HEK293 (cell line): ENCODE measurements at regions of chrX and their contacts with region 1.

Region 1: DNA sequence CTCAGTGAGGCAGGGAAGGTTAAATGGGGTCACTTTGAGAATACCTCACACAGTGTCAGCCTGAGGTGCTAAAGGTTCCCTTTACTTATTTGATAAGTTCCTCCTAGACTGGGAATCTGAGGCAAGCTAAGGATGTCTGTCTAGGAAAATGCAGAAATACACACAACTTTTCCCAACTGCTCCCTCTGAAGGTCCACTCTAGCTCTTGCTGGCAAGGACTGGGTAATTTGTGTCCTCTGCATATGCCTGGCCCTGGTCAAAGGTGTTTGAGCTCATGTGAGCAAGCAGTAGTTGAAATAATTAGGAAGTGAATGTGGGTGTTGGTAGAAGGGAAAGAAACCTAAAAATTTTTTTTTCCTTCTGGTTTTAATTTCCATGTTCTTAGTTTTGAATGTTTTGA is 21.3 kb downstream of the TXLNG start:
- H3K4me3 ChIP-seq: no peak overlapping the region
- H3K27ac ChIP-seq: no peak overlapping the region
- H3K4me1 ChIP-seq: peaks cover 9% of the 10 kb centered on the region
- CTCF ChIP-seq: no peak

Region 2: GRCh38 chrX:16797358-16797757 is 10.2 kb before region 1 on chrX:
- CTCF ChIA-PET with region 1: interaction called, 16 read pairs
- POLR2A ChIA-PET with region 1: no interaction called
- H3K4me3 ChIP-seq: no peak overlapping the region
- H3K27ac ChIP-seq: no peak overlapping the region
- H3K4me1 ChIP-seq: no peaks in the 10 kb centered on the region
- CTCF ChIP-seq: no peak

Region 3: GRCh38 chrX:17038681-17039161 is 231.2 kb after region 1 on chrX:
- CTCF ChIA-PET with region 1: no interaction called
- POLR2A ChIA-PET with region 1: no interaction called
- H3K4me3 ChIP-seq: no peak overlapping the region
- H3K27ac ChIP-seq: no peak overlapping the region
- H3K4me1 ChIP-seq: peaks cover 12% of the 10 kb centered on the region
- CTCF ChIP-seq: no peak